Esophagus muscularis mucosa (tissue), 4 donors: ENCODE measurements at regions of chr9 and their contacts with region 1.

Region 1: GRCh38 chr9:33264473-33265177 is at the starts of genes BAG1 and CHMP5:
- DNase-seq: peak; percentile 100
- H3K4me3 ChIP-seq: peak within 1 kb of the TSS; percentile 71 to 90 (median 86)
- H3K27ac ChIP-seq: peak within 1 kb of the TSS; percentile 91 to 95 (median 92)
- H3K4me1 ChIP-seq: peaks cover 21 to 46% (median 34%) of the 10 kb centered on the region in 4 donors
- H3K27me3 ChIP-seq: no peaks in the 10 kb centered on the region
- CTCF ChIP-seq: peak; percentile 29 to 47 (median 32)
- EP300 ChIP-seq: no peak
- POLR2A ChIP-seq: peak; percentile 21
- total RNA-seq, gene BAG1: 108 to 154 (median 126) TPM
- total RNA-seq, gene CHMP5: 48.0 to 77.2 (median 65.2) TPM

Region 2: GRCh38 chr9:32384364-32385151 is 880.1 kb before region 1 on chr9 and contains the start of gene ACO1:
- intact Hi-C with region 1: loop called (anchors 10 kb)
- DNase-seq: peak; percentile 93
- H3K4me3 ChIP-seq: peak within 1 kb of the TSS; percentile 76 to 82 (median 80)
- H3K27ac ChIP-seq: peak within 1 kb of the TSS; percentile 86 to 90 (median 90)
- H3K4me1 ChIP-seq: peaks cover 32 to 56% (median 53%) of the 10 kb centered on the region in 4 donors
- H3K27me3 ChIP-seq: no peaks in the 10 kb centered on the region
- CTCF ChIP-seq: peak in 2 of 3 experiments; percentile 13 to 27
- EP300 ChIP-seq: no peak
- POLR2A ChIP-seq: peak; percentile 42
- total RNA-seq, gene ACO1: 64.4 to 91.9 (median 86.5) TPM

Region 3: DNA sequence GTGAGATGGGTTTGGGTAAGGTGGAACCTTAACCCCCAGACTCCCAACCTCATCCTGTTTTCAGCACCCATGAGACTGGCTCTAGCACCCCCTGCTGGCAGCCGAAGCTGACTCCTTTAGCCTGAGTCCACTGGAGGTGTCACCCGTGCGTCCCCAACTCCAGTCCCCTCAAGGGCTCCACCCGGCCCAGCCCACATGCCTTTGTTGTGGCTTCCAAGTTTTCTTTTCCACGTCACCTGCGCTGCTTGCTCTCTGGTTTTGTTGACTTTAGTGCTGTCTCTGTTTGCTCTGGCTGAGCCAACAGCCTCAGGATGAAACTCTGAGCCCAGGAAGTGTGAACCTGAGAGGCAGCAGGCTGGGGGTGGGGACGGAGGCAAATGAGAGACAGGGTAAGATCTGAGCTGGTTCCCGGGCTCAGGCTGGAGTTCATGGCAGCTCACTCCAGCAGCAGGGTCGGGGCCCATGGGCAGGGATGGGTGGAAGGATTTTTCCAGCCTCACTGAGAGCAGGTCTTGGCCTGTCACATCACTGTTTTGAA is 150.9 kb after region 1 on chr9:
- intact Hi-C with region 1: no loop called
- DNase-seq: no peak
- H3K4me3 ChIP-seq: no peak overlapping the region
- H3K27ac ChIP-seq: no peak overlapping the region
- H3K4me1 ChIP-seq: peaks cover 3 to 21% (median 13%) of the 10 kb centered on the region in 4 donors
- H3K27me3 ChIP-seq: peaks cover 0 to 18% (median 0%) of the 10 kb centered on the region in 4 donors
- CTCF ChIP-seq: peak; percentile 76 to 84 (median 77)
- EP300 ChIP-seq: no peak
- POLR2A ChIP-seq: no peak